Sigmoid colon (tissue), 7 donors: ENCODE measurements at regions of chr2 and their contacts with region 1.

Region 1: GRCh38 chr2:38465789-38466127 is 88.7 kb upstream of the ATL2 start:
- DNase-seq: no peak
- H3K4me3 ChIP-seq: no peak overlapping the region
- H3K27ac ChIP-seq: peak overlapping the region; percentile 86 to 91 (median 88)
- H3K4me1 ChIP-seq: peaks cover 0 to 96% (median 73%) of the 10 kb centered on the region in 4 donors
- H3K27me3 ChIP-seq: no peaks in the 10 kb centered on the region
- CTCF ChIP-seq: peak in 1 of 4 experiments; percentile 23
- EP300 ChIP-seq: no peak
- POLR2A ChIP-seq: no peak

Region 2: DNA sequence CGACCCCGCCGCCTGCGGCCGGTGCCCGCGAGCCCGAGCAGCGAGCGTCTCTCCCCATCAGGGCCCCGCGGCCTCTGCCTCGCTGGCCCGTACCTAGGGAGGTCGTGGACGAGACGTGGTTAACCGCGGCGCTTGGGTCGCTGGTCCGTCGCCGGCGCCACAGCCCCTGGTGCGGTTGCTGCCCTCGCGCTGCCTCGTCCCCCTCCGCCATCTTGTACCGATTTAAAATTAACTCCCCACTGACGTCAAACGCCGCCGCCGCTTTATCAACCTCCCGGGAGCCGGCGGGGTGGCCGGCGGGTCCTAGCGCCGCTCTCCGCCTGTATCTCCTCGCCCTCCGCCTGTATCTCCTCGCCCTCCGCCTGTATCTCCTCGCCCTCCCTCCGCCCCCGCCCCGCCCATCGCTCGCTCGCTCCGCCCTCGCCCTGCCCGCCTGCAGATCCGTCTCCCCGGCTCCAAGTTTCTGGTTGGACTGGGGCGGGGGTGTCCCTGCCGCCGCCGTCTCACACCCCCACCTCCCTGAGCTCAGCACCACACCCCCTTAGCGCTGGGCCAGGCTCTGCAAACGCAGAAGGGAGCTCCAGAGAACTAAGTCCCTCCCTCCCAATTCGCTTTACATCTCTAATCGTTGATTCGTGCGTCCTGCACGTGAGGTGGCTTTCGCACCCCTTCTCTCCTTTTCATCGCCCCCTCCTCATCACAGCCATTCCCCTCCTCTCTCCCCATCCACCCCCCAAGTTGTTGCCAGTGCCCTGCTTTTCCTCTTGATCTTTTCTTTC is 88.5 kb before region 1 on chr2 and contains the start of gene ATL2:
- intact Hi-C with region 1: loop called (anchors 2 kb)
- DNase-seq: peak; percentile 98
- H3K4me3 ChIP-seq: peak within 1 kb of the TSS; percentile 80 to 98 (median 92)
- H3K27ac ChIP-seq: peak within 1 kb of the TSS; percentile 98 to 99 (median 99)
- H3K4me1 ChIP-seq: peaks cover 0 to 44% (median 27%) of the 10 kb centered on the region in 4 donors
- H3K27me3 ChIP-seq: no peaks in the 10 kb centered on the region
- CTCF ChIP-seq: no peak
- EP300 ChIP-seq: peak; percentile 13 to 76 (median 26)
- POLR2A ChIP-seq: peak; percentile 89 to 90
- total RNA-seq, gene ATL2: 176 to 271 (median 205) TPM

Region 3: DNA sequence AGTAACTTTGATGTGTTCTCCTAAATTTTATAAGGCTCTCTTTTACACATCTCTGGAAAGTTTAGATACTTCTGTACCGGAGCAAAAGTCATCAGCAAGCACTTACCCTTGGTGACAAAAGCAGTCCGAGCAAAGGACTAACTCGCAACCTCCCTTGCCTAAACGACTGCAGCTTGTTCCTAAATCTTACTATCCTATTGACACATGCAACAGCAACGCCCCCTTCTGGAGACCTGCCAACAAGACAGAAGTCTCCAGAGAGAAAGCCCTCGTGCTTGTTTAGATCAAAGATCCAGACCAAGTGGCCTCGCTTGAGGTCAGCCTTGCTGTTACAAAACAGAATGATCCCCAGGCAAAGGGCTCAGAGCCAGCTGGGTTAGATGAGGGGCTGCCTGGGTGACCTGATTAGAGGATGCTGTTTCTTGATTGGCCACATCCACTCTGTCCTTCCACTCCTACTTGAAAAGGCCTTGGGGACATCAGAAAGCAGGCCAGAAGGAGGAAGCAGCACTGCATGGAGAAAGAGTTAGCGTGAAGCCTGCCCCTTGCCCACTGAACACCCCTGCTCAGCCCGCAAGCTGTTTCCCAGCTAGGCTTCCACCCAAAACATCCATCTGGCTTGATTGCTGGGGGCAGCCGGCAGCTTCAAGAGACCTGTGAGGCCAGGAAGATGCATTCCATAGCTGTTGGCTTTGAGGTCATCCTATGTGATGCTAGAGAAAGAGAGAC is 42.7 kb after region 1 on chr2:
- intact Hi-C with region 1: loop called (anchors 5 kb)
- DNase-seq: peak; percentile 95
- H3K4me3 ChIP-seq: no peak overlapping the region
- H3K27ac ChIP-seq: peak overlapping the region; percentile 76 to 93 (median 80)
- H3K4me1 ChIP-seq: peaks cover 0 to 63% (median 46%) of the 10 kb centered on the region in 4 donors
- H3K27me3 ChIP-seq: no peaks in the 10 kb centered on the region
- CTCF ChIP-seq: no peak
- EP300 ChIP-seq: no peak
- POLR2A ChIP-seq: no peak